ENCODE measurements at regions of chr21 and their contacts with region 1.

Region 1: DNA sequence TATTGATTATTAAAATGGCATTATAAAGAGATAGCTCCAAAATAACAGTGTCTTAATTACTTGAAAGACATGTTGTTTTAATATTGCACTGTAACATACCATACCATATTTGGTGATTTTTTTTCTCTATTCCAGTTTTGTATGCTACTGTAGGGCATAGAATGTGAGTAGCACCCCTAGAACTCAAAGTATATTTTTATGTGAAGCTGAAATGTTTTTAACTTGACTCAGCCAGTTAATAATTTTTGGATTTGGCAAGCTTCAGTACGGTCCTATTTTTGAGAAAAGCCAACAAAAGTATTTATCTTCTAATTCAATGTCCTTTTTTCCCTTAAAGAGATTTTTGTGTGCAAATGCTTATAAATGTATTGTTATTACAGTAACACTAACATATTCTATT is 593.8 kb downstream of the USP25 start:
- DNase-seq: no peak
- H3K4me3 ChIP-seq: no peak overlapping the region
- H3K4me3 Mint-ChIP-seq: no peak overlapping the region
- H3K27ac ChIP-seq: no peak overlapping the region
- H3K27ac Mint-ChIP-seq: no peak overlapping the region
- H3K4me1 ChIP-seq: no peaks in the 10 kb centered on the region
- H3K4me1 Mint-ChIP-seq: peaks cover 0 to 3% (median 0%) of the 10 kb centered on the region in 4 donors
- H3K27me3 ChIP-seq: no peaks in the 10 kb centered on the region
- H3K27me3 Mint-ChIP-seq: no peaks in the 10 kb centered on the region

Region 2: DNA sequence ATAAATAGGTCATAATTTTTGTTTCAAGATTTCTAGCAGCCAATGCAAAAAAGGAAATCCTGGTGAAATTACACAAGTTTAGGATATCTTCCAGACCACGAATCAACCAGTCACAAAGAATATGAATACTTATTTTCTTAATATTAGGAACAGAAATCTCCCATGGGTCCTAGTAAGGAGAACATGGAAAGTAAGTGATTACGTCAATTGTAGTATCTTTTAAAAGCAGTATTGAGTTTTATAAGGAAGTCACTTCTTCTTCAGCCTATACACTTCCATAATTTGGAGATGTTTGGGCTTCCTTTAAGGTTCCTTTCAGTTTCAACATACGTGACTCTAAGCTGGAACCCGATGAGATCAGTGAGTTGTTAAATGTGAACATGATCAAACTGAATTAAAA is 59.3 kb before region 1 on chr21:
- CTCF ChIA-PET with region 1: no interaction called
- POLR2A ChIA-PET with region 1: no interaction called
- intact Hi-C with region 1: loop called (anchors 10 kb)
- DNase-seq: no peak
- H3K4me3 ChIP-seq: no peak overlapping the region
- H3K4me3 Mint-ChIP-seq: no peak overlapping the region
- H3K27ac ChIP-seq: no peak overlapping the region
- H3K27ac Mint-ChIP-seq: no peak overlapping the region
- H3K4me1 ChIP-seq: no peaks in the 10 kb centered on the region
- H3K4me1 Mint-ChIP-seq: no peaks in the 10 kb centered on the region
- H3K27me3 ChIP-seq: no peaks in the 10 kb centered on the region
- H3K27me3 Mint-ChIP-seq: no peaks in the 10 kb centered on the region

Measured in CD4-positive, alpha-beta memory T cell (primary cell).